GM12878 (cell line): ENCODE measurements at regions of chr1 and their contacts with region 1.

Region 1: DNA sequence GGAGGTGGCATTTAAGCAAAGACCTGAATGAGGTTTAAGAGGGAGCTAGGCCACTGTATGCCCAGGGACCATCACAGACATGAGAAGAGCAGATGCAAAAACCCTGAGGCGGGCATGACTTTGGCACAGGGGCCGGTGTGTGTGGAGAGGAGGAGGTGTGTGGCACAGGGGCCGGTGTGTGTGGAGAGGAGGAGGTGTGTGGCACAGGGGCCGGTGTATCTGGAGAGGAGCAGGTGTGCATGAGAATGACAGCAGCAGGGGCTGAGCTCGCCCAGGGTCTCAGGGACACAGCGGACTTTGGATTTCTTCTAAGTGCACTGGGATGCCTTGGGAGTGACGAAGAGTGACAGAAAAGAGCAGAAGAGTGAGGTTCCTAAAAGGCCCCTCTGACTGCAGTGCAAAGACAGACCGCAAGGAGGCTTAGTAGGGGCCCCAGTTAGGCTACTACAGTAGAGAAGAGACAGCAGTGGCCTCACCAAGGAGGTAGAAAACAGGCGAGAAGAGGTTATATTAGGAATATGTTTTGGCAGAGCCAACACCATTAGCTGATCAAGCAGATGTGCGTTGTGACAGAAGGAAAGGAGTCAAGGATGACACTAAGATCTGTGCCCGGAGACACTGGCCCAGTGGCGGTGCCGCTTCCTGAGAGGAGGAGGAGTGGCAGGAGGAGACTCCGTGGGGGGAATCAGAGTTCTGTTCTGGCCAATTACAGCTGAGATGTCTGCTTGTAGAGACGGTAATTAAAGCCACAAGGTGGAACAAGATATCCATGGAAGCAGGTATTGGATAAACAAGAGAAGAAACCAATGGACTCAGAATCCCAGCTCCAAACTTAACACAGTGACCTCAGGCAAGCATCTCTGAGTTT is 18.4 kb downstream of the ZBTB17 start:
- DNase-seq: no peak
- ATAC-seq: peak; percentile 86
- H3K4me3 ChIP-seq: no peak overlapping the region
- H3K27ac ChIP-seq: no peak overlapping the region
- H3K4me1 ChIP-seq: peaks cover 3% of the 10 kb centered on the region
- H3K27me3 ChIP-seq: no peaks in the 10 kb centered on the region
- CTCF ChIP-seq: peak; percentile 22 to 61 (median 25); a peak in 5 of 6 replicates
- EP300 ChIP-seq: no peak
- POLR2A ChIP-seq: no peak
- RAD21 ChIP-seq: no peak

Region 2: DNA sequence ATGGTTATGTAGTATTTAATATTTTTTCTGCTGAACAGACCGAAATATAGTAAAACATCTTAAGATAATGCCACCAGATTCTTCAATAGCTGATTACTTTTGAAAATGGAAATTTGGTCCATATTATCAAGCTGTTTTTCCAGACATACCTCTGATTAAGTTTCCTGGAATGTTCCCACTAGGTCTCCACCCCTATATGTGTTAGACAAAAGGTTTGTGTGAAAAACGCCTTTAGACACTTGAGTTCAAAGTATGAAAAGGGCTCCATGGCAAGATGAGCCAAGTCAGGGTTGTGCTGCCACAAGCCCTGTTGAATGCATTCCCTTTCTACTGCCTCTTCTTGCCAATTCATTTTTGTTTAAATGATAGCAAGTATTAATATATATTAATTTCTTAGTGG is 34.2 kb before region 1 on chr1:
- CTCF ChIA-PET with region 1: no interaction called
- POLR2A ChIA-PET with region 1: no interaction called
- RAD21 ChIA-PET with region 1: no interaction called
- SMC1A ChIA-PET with region 1: no interaction called
- in situ Hi-C with region 1: no loop called
- intact Hi-C with region 1: no loop called
- DNase-seq: no peak
- ATAC-seq: no peak
- H3K4me3 ChIP-seq: no peak overlapping the region
- H3K27ac ChIP-seq: no peak overlapping the region
- H3K4me1 ChIP-seq: peaks cover 9% of the 10 kb centered on the region; the same call in 1 of the 2 replicates
- H3K27me3 ChIP-seq: no peaks in the 10 kb centered on the region
- CTCF ChIP-seq: no peak
- EP300 ChIP-seq: no peak
- POLR2A ChIP-seq: no peak
- RAD21 ChIP-seq: no peak

Region 3: GRCh38 chr1:15994590-15995351 is 37.3 kb after region 1 on chr1:
- CTCF ChIA-PET with region 1: interaction called, 3 read pairs
- POLR2A ChIA-PET with region 1: no interaction called
- RAD21 ChIA-PET with region 1: no interaction called
- SMC1A ChIA-PET with region 1: interaction called, 4 read pairs
- in situ Hi-C with region 1: no loop called
- intact Hi-C with region 1: loop called (anchors 1 kb)
- DNase-seq: no peak
- ATAC-seq: peak; percentile 97
- H3K4me3 ChIP-seq: no peak overlapping the region
- H3K27ac ChIP-seq: no peak overlapping the region
- H3K4me1 ChIP-seq: no peaks in the 10 kb centered on the region
- H3K27me3 ChIP-seq: no peaks in the 10 kb centered on the region
- CTCF ChIP-seq: peak; percentile 72 to 83 (median 78)
- EP300 ChIP-seq: no peak
- POLR2A ChIP-seq: no peak
- RAD21 ChIP-seq: peak; percentile 85

Region 4: DNA sequence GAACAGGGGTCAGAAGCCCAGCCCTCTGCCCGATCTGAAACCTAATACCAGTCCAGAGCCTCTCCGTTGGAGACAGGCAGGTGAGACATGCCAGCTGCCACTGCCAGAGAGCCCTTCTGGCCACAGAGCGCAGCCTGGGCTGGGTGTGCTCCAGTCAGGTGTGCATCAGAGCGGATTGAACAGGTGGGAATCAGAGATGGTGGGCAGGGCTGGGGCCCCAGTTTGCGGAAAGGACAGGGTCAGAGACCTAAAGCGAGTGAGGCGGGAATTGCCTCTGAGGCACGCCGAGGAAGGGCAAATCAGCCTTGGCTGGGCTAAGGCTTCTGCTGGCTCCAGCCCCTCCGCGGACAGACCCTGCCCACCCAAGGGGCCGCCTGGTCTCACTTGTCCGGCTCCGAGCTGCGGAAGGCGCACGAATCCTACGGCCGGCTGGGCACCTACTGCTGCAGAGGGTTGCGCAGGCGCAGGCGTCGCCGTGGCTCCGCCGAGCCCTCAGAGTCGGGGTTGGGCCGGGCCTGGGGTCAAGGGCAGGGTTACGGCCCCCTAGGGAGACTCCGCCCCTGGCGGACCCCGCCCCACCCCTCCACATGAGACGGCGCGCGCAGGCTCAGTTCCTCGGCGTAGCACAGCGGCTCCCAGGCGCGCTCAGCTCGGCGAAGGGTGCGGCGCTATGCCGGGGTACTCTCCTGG is 269.2 kb after region 1 on chr1:
- CTCF ChIA-PET with region 1: no interaction called
- POLR2A ChIA-PET with region 1: no interaction called
- RAD21 ChIA-PET with region 1: no interaction called
- SMC1A ChIA-PET with region 1: no interaction called
- in situ Hi-C with region 1: no loop called
- intact Hi-C with region 1: no loop called
- DNase-seq: no peak
- ATAC-seq: no peak
- H3K4me3 ChIP-seq: no peak overlapping the region
- H3K27ac ChIP-seq: no peak overlapping the region
- H3K4me1 ChIP-seq: no peaks in the 10 kb centered on the region
- H3K27me3 ChIP-seq: peaks cover 2 to 7% of the 10 kb centered on the region in 2 experiments
- CTCF ChIP-seq: no peak
- EP300 ChIP-seq: no peak
- POLR2A ChIP-seq: no peak
- RAD21 ChIP-seq: no peak

Region 5: DNA sequence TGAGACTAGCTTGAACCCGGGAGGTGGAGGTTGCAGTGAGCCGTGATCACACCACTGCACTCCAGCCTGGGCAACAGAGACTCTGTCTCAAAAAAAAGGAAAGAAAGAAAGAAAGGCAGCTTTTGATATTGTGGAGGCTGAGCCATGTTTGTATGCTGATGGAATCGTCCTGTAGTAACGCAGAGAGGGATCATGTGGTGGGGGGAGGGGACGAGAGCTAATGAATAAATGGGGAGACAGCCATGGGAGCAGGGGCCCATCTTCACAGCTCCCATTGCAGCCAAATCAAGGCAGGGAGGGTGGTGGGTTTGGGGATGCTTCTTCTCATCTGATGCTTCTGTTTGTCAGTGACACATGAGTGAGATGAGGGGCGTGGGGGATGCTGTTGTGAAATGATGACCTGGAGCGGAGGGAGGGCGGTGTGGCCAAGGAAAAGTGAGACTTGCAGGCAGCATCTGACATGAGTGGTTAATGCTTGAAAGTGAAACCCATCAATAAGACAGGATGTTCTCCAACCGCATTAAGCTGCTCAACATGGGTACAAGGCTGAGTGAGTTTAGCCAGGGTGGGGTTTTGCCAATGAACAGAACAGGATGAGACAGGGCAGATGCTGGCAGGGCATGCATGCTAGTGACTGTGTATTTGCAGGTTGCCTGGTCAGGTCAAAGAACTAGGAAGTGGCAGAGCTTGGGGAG is 463.1 kb after region 1 on chr1:
- CTCF ChIA-PET with region 1: no interaction called
- POLR2A ChIA-PET with region 1: no interaction called
- RAD21 ChIA-PET with region 1: no interaction called
- SMC1A ChIA-PET with region 1: no interaction called
- in situ Hi-C with region 1: no loop called
- intact Hi-C with region 1: no loop called
- DNase-seq: peak; percentile 84
- ATAC-seq: peak; percentile 97
- H3K4me3 ChIP-seq: peak overlapping the region; percentile 23; the same call in 1 of the 2 replicates
- H3K27ac ChIP-seq: no peak overlapping the region
- H3K4me1 ChIP-seq: peaks cover 18% of the 10 kb centered on the region
- H3K27me3 ChIP-seq: no peaks in the 10 kb centered on the region
- CTCF ChIP-seq: no peak
- EP300 ChIP-seq: no peak
- POLR2A ChIP-seq: no peak
- RAD21 ChIP-seq: no peak